Psoas muscle (tissue), 8 donors: ENCODE measurements at regions of chr10 and their contacts with region 1.

Region 1: GRCh38 chr10:43396928-43397624 is 11.9 kb downstream of the HNRNPF start:
- DNase-seq: peak; percentile 88 to 92
- ATAC-seq: peak; percentile 91 to 95 (median 92)
- H3K4me3 ChIP-seq: peak overlapping the region; percentile 75
- H3K27ac ChIP-seq: peak overlapping the region; percentile 94
- H3K4me1 ChIP-seq: peaks cover 54% of the 10 kb centered on the region
- H3K27me3 ChIP-seq: no peaks in the 10 kb centered on the region
- CTCF ChIP-seq: no peak

Region 2: GRCh38 chr10:43407576-43408330 is 10.7 kb after region 1 on chr10:
- intact Hi-C with region 1: loop called in 1 of 2 experiments (anchors 1 kb)
- DNase-seq: peak; percentile 90 to 93
- ATAC-seq: peak; percentile 68 to 80 (median 76)
- H3K4me3 ChIP-seq: peak overlapping the region; percentile 86
- H3K27ac ChIP-seq: peak overlapping the region; percentile 99
- H3K4me1 ChIP-seq: peaks cover 38% of the 10 kb centered on the region
- H3K27me3 ChIP-seq: no peaks in the 10 kb centered on the region
- CTCF ChIP-seq: peak; percentile 21

Region 3: GRCh38 chr10:43436400-43437140 is 39.5 kb after region 1 on chr10 and contains the start of gene ZNF487:
- intact Hi-C with region 1: loop called in 1 of 2 experiments (anchors 5 kb)
- DNase-seq: peak; percentile 90 to 94
- ATAC-seq: peak; percentile 98 to 99 (median 98)
- H3K4me3 ChIP-seq: peak within 1 kb of the TSS; percentile 87
- H3K27ac ChIP-seq: peak within 1 kb of the TSS; percentile 97
- H3K4me1 ChIP-seq: peaks cover 12% of the 10 kb centered on the region
- H3K27me3 ChIP-seq: no peaks in the 10 kb centered on the region
- CTCF ChIP-seq: peak; percentile 11
- total RNA-seq, gene ZNF487: 1.2 to 2.1 (median 1.5) TPM